ENCODE measurements at regions of chr22 and their contacts with region 1.

Region 1: GRCh38 chr22:30178181-30179126 is 68.1 kb downstream of the LIF start:
- DNase-seq: no peak
- ATAC-seq: peak; percentile 44
- H3K4me3 ChIP-seq: no peak overlapping the region
- H3K27ac ChIP-seq: no peak overlapping the region
- H3K4me1 ChIP-seq: peaks cover 11% of the 10 kb centered on the region
- H3K27me3 ChIP-seq: no peaks in the 10 kb centered on the region
- CTCF ChIP-seq: no peak
- POLR2A ChIP-seq: no peak
- RAD21 ChIP-seq: no peak

Region 2: DNA sequence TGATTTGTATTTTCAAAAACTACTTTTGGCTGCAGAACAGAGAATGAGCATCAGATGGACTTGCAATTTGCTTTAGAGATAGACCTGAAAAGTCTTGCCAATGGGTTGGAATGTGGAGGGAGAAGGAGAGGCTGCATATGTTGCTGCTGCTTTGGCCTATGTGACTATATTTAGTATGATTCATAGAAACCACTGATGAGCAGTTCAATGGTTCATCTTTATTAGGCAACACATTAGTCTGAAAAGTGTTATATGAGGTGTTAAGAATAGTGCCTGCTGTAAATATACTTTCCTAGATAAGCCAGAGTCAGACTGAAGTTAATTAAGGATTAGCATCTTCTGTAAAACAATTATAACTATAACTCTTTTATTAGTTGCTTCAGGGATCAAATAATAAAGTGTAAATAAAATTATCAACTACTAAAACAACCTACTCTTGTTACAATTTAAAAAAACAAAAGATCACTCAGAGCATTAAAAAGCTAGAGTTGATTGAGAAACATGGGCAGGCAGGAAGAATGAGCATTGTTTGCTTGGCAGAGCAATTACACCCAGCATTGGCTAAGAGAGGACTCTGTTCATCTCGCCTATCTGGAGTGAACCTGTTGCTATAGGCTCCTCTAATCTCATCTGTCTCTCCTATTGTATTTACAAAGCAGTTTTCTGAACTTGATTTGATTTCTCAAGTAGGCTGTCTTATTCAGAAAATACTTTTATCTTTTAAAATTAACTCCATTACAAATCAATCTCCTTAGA is 61.9 kb before region 1 on chr22:
- CTCF ChIA-PET with region 1: interaction called, 4 read pairs
- POLR2A ChIA-PET with region 1: no interaction called
- dilution Hi-C with region 1: no loop called
- in situ Hi-C with region 1: loop called (anchors 10 kb)
- intact Hi-C with region 1: no loop called
- DNase-seq: peak; percentile 78
- ATAC-seq: peak; percentile 72
- H3K4me3 ChIP-seq: no peak overlapping the region
- H3K27ac ChIP-seq: no peak overlapping the region
- H3K4me1 ChIP-seq: peaks cover 12% of the 10 kb centered on the region
- H3K27me3 ChIP-seq: no peaks in the 10 kb centered on the region
- CTCF ChIP-seq: no peak
- POLR2A ChIP-seq: no peak
- RAD21 ChIP-seq: no peak

Region 3: GRCh38 chr22:30132290-30132996 is 46.0 kb before region 1 on chr22:
- CTCF ChIA-PET with region 1: no interaction called
- POLR2A ChIA-PET with region 1: no interaction called
- dilution Hi-C with region 1: no loop called
- in situ Hi-C with region 1: no loop called
- intact Hi-C with region 1: loop called (anchors 5 kb)
- DNase-seq: no peak
- ATAC-seq: no peak
- H3K4me3 ChIP-seq: no peak overlapping the region
- H3K27ac ChIP-seq: no peak overlapping the region; the same call in 1 of the 2 replicates
- H3K4me1 ChIP-seq: peaks cover under 1% of the 10 kb centered on the region
- H3K27me3 ChIP-seq: no peaks in the 10 kb centered on the region
- CTCF ChIP-seq: no peak
- POLR2A ChIP-seq: no peak
- RAD21 ChIP-seq: no peak

Measured in IMR-90 (cell line).